WTC11 (cell line): ENCODE measurements at regions of chr12 and their contacts with region 1.

Region 1: GRCh38 chr12:113980537-113981337 is 14.6 kb upstream of the RBM19 start:
- DNase-seq: peak; percentile 50
- ATAC-seq: peak; percentile 87
- H3K4me3 Mint-ChIP-seq: no peak overlapping the region
- H3K27ac Mint-ChIP-seq: no peak overlapping the region
- H3K4me1 Mint-ChIP-seq: no peaks in the 10 kb centered on the region; the same call in 1 of the 2 replicates
- H3K27me3 Mint-ChIP-seq: peaks cover 14% of the 10 kb centered on the region
- CTCF ChIP-seq: peak; percentile 93

Region 2: DNA sequence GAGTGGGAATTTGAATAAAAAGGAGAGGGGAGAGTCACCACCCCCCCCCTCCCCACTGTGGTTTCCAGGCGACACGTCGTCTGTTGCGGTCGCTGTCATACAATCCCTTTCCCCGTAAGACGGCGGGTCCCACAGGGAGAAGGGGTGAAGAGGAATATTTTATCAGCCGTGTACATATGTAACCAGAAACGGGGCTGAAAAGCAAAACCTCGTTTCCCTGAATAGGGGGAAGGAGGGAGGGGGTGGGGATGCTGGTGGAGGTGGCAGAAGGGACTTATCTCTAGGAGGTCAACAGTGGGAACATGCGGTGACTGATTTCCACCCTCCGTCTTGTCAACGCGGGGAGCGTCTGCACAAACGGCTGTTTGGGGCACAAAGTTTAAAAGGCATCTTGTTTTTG is 186.0 kb before region 1 on chr12:
- CTCF ChIA-PET with region 1: no interaction called
- POLR2A ChIA-PET with region 1: no interaction called
- DNase-seq: no peak
- ATAC-seq: no peak
- H3K4me3 Mint-ChIP-seq: no peak overlapping the region
- H3K27ac Mint-ChIP-seq: no peak overlapping the region
- H3K4me1 Mint-ChIP-seq: no peaks in the 10 kb centered on the region
- H3K27me3 Mint-ChIP-seq: peaks cover 12% of the 10 kb centered on the region
- CTCF ChIP-seq: no peak

Region 3: DNA sequence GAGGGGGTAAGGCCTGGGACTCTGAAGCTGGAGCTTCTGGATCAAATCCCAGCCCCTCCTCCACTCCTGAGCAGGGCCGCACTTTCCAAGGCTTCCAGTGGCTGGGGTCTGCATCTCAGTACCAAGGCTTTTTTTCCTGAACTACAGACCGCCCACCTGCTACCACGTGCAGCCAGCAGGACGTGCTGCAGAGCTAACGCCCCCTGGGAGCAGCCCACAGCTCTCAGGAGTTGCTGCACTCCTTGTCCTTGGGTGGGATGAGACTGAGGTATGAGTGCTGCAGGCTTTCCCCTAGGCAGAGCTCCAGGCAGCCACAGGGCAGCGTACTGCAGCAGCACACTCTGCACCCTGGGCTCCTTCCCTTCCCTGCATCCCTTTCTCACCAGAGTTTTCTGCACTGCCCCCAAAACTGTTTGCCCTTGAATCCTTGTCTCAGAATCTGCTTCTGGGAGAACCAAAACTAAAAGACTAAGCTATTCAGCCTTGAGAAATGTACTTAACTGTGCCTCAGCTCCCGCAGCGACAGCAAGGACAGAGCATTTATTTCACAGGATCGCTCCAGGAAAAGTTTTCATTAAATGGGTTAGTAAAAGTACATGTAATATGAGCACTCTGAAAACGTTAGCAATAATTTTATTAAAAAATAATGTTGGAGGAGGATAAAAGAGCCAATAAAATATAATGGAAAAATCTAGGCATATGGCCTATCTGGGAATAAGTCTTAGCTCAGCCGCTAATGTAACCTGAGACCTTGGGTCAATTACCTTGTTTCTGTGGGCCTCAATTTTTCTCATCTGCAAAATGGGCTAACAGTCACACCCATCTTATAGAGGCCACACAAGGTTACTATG is 40.2 kb before region 1 on chr12:
- CTCF ChIA-PET with region 1: no interaction called
- POLR2A ChIA-PET with region 1: no interaction called
- DNase-seq: peak; percentile 34
- ATAC-seq: peak; percentile 91
- H3K4me3 Mint-ChIP-seq: no peak overlapping the region
- H3K27ac Mint-ChIP-seq: no peak overlapping the region
- H3K4me1 Mint-ChIP-seq: no peaks in the 10 kb centered on the region
- H3K27me3 Mint-ChIP-seq: no peaks in the 10 kb centered on the region
- CTCF ChIP-seq: no peak

Region 4: GRCh38 chr12:113965951-113966797 is 14.6 kb before region 1 on chr12 and contains the start of gene RBM19:
- CTCF ChIA-PET with region 1: interaction called, 26 read pairs
- POLR2A ChIA-PET with region 1: no interaction called
- DNase-seq: peak; percentile 98
- ATAC-seq: peak; percentile 99
- H3K4me3 Mint-ChIP-seq: peak within 1 kb of the TSS; percentile 100
- H3K27ac Mint-ChIP-seq: peak within 1 kb of the TSS; percentile 100
- H3K4me1 Mint-ChIP-seq: peaks cover 28% of the 10 kb centered on the region
- H3K27me3 Mint-ChIP-seq: peaks cover 11% of the 10 kb centered on the region
- CTCF ChIP-seq: peak; percentile 67
- total RNA-seq, gene RBM19: 41.2 to 60.1 TPM (median 42.0 TPM) in 3 replicates

Region 5: DNA sequence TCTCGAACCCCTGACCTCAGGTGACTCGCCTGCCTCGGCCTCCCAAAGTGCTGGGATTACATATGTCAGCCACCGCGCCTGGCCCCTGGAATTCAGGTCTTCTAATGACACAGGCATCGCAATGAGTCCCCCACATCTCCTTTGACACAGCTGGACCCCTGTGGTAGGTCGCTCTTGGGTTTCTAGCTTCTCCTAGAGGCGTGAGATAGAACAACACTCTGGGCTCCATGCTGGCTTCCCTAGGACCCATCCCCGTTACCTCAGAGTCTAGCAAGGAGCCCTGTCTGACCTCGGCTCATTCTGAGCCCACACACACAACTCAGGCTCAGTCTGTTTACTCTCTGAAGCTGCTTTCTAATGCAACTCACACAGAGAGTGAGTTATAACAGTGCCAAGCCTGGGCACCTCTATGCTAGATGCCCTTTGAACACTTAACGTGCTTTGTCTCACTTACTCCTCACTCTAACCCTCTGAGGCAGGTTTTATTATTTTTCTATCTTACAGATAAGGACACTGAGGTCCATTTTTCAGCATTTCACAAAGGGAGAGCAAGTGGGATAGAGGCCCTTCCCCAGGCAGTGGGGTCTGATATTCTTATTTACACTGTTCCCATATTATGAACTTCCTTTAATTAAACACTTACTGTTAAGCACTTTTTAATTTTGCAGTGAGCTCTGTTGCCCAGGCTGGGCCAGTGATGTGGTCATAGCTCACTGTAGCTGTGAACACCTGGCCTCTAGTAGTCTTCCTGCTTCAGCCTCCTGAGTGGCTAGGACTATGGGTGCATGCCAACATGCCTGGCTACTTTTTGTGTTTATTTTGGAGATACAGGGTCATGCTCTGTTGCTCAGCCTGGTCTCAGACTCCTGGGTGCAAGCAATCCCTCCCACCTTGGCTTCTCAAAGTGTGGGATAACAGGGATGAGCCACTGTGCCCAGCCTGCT is 26.0 kb after region 1 on chr12:
- CTCF ChIA-PET with region 1: interaction called, 11 read pairs
- POLR2A ChIA-PET with region 1: no interaction called
- DNase-seq: no peak
- ATAC-seq: peak; percentile 60
- H3K4me3 Mint-ChIP-seq: no peak overlapping the region
- H3K27ac Mint-ChIP-seq: no peak overlapping the region
- H3K4me1 Mint-ChIP-seq: no peaks in the 10 kb centered on the region
- H3K27me3 Mint-ChIP-seq: peaks cover under 1% of the 10 kb centered on the region; the same call in 1 of the 2 replicates
- CTCF ChIP-seq: no peak

Region 6: GRCh38 chr12:114131824-114132223 is 151.1 kb after region 1 on chr12:
- CTCF ChIA-PET with region 1: interaction called, 31 read pairs
- POLR2A ChIA-PET with region 1: no interaction called
- DNase-seq: peak; percentile 14
- ATAC-seq: peak; percentile 91
- H3K4me3 Mint-ChIP-seq: no peak overlapping the region
- H3K27ac Mint-ChIP-seq: no peak overlapping the region
- H3K4me1 Mint-ChIP-seq: no peaks in the 10 kb centered on the region
- H3K27me3 Mint-ChIP-seq: peaks cover 20% of the 10 kb centered on the region
- CTCF ChIP-seq: no peak

Region 7: GRCh38 chr12:114480337-114481199 is 499.8 kb after region 1 on chr12:
- CTCF ChIA-PET with region 1: interaction called, 16 read pairs
- POLR2A ChIA-PET with region 1: no interaction called
- DNase-seq: peak; percentile 14
- ATAC-seq: no peak
- H3K4me3 Mint-ChIP-seq: peak overlapping the region; percentile 82
- H3K27ac Mint-ChIP-seq: no peak overlapping the region
- H3K4me1 Mint-ChIP-seq: peaks cover 34% of the 10 kb centered on the region
- H3K27me3 Mint-ChIP-seq: peaks cover 83% of the 10 kb centered on the region
- CTCF ChIP-seq: no peak

Region 8: DNA sequence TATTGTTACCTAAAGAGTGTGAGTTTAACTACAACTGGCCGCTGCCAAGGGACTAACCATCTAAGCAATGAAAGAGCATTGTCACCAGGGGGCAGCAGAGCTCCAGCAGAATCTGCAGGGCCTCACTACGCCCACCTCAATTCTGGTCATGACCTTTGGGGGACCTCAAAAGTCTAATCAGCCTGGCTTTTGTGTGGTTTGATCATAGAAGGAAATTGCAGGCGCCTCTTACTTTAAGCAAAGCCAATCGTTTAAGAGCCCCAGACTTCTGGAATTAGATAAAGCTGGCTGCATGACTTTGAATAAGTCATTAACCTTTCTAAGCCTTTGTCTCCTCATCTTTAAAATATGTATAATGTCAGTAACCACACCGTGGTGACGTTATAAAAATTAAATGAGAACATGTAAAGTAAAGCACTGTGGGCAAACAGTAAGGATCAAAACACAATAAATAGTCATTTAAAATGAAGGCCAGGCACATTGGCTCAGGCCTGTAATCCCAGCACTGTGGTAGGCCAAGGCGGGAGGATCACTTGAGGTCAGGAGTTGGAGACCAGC is 644.6 kb after region 1 on chr12:
- CTCF ChIA-PET with region 1: interaction called, 19 read pairs
- POLR2A ChIA-PET with region 1: no interaction called
- DNase-seq: peak; percentile 83
- ATAC-seq: peak; percentile 96
- H3K4me3 Mint-ChIP-seq: no peak overlapping the region
- H3K27ac Mint-ChIP-seq: no peak overlapping the region
- H3K4me1 Mint-ChIP-seq: no peaks in the 10 kb centered on the region
- H3K27me3 Mint-ChIP-seq: peaks cover 3% of the 10 kb centered on the region; the same call in 1 of the 2 replicates
- CTCF ChIP-seq: peak; percentile 89